HCT116 (cell line): ENCODE measurements at regions of chr5 and their contacts with region 1.

Region 1: GRCh38 chr5:133111299-133111698 is 59.5 kb downstream of the HSPA4 start:
- DNase-seq: peak; percentile 68
- ATAC-seq: peak; percentile 89
- H3K4me3 ChIP-seq: no peak overlapping the region
- H3K27ac ChIP-seq: no peak overlapping the region
- H3K4me1 ChIP-seq: peaks cover 0 to 6% of the 10 kb centered on the region in 2 experiments; a peak in 1 of 4 replicates
- H3K27me3 ChIP-seq: no peaks in the 10 kb centered on the region
- CTCF ChIP-seq: peak; percentile 92 to 97 (median 93)
- POLR2A ChIP-seq: no peak
- RAD21 ChIP-seq: peak; percentile 99

Region 2: DNA sequence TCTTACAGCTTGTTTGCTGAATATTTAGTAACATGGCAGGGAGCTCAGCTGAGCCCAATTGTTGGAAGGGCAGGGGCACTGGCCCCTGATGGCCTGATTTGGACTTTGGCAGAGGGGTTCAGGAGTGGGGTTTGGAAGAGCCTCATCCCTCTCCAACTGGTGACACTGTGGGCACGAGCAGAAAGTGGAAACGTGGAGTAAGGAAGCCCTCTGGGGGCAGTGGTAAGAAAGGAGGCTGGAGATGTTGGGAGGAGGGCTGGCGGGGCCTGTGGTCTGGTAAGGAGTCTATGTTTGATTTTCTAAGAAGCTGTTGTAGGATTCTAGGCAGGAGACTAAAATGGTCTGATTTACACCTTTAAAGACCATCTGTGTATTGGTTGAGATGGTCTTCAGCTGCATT is 149.4 kb after region 1 on chr5:
- CTCF ChIA-PET with region 1: interaction called, 4 read pairs
- POLR2A ChIA-PET with region 1: no interaction called
- RAD21 ChIA-PET with region 1: interaction called in 1 of 2 experiments, 3 read pairs
- intact Hi-C with region 1: loop called (anchors 1 kb)
- DNase-seq: no peak
- ATAC-seq: peak; percentile 67
- H3K4me3 ChIP-seq: no peak overlapping the region
- H3K27ac ChIP-seq: no peak overlapping the region
- H3K4me1 ChIP-seq: no peaks in the 10 kb centered on the region
- H3K27me3 ChIP-seq: no peaks in the 10 kb centered on the region
- CTCF ChIP-seq: peak in 2 of 3 experiments; percentile 15 to 37; a peak in 2 of 6 replicates
- POLR2A ChIP-seq: no peak
- RAD21 ChIP-seq: peak; percentile 63

Region 3: GRCh38 chr5:133347039-133347438 is 235.7 kb after region 1 on chr5:
- CTCF ChIA-PET with region 1: no interaction called
- POLR2A ChIA-PET with region 1: no interaction called
- RAD21 ChIA-PET with region 1: no interaction called
- intact Hi-C with region 1: loop called (anchors 1 kb)
- DNase-seq: peak; percentile 56
- ATAC-seq: peak; percentile 100
- H3K4me3 ChIP-seq: no peak overlapping the region
- H3K27ac ChIP-seq: no peak overlapping the region
- H3K4me1 ChIP-seq: peaks cover 0 to 9% of the 10 kb centered on the region in 2 experiments; a peak in 2 of 4 replicates
- H3K27me3 ChIP-seq: peaks cover 8% of the 10 kb centered on the region; the same call in 1 of the 2 replicates
- CTCF ChIP-seq: peak; percentile 41 to 73 (median 44); a peak in 5 of 6 replicates
- POLR2A ChIP-seq: no peak
- RAD21 ChIP-seq: peak; percentile 67

Region 4: GRCh38 chr5:133868946-133869518 is 757.7 kb after region 1 on chr5:
- CTCF ChIA-PET with region 1: no interaction called
- POLR2A ChIA-PET with region 1: no interaction called
- RAD21 ChIA-PET with region 1: no interaction called
- intact Hi-C with region 1: loop called (anchors 5 kb)
- DNase-seq: peak; percentile 53
- ATAC-seq: peak; percentile 90
- H3K4me3 ChIP-seq: no peak overlapping the region; a peak in 1 of 4 replicates
- H3K27ac ChIP-seq: no peak overlapping the region
- H3K4me1 ChIP-seq: peaks cover 0 to 5% of the 10 kb centered on the region in 2 experiments; a peak in 1 of 4 replicates
- H3K27me3 ChIP-seq: no peaks in the 10 kb centered on the region
- CTCF ChIP-seq: peak; percentile 66 to 90 (median 82)
- POLR2A ChIP-seq: no peak
- RAD21 ChIP-seq: peak; percentile 73